Activated CD8-positive, alpha-beta T cell treated with anti-CD3 and anti-CD28 coated beads for 36 hours (primary cell): ENCODE measurements at regions of chr19 and their contacts with region 1.

Region 1: DNA sequence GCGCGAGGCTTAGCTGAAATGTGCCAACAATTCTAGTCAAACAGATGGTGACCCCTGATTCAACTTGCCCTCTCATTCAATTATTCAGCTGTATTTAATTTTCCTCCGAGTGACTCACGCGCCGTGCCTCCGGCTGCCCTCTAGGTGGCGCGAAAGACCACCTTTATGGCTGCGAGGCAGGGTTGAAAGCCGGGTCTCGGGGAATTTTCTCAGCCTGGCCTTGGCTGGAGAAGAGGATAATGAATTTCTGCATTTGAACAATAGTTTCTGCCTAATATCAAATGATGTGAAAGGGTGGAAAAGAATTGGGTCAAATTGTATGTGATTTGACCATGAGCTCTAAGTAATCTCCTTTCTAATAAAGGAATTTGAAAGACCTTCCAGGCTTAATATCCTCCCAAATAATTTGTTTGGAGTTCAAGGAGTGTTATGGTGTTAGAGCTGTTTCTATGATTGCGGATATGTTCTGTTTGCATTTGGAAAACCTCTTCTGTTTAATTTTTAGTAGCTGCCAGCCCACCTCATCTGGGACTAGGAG is 310.9 kb downstream of the ZNF536 start:
- DNase-seq: peak; percentile 64
- ATAC-seq: peak; percentile 68
- H3K4me3 Mint-ChIP-seq: no peak overlapping the region
- H3K27ac Mint-ChIP-seq: no peak overlapping the region
- H3K4me1 Mint-ChIP-seq: no peaks in the 10 kb centered on the region
- H3K27me3 Mint-ChIP-seq: peaks cover 27% of the 10 kb centered on the region
- CTCF ChIP-seq: peak; percentile 84

Region 2: GRCh38 chr19:30640252-30640965 is 42.7 kb before region 1 on chr19:
- CTCF ChIA-PET with region 1: no interaction called
- POLR2A ChIA-PET with region 1: no interaction called
- intact Hi-C with region 1: no loop called
- DNase-seq: no peak
- ATAC-seq: no peak
- H3K4me3 Mint-ChIP-seq: no peak overlapping the region
- H3K27ac Mint-ChIP-seq: no peak overlapping the region
- H3K4me1 Mint-ChIP-seq: no peaks in the 10 kb centered on the region
- H3K27me3 Mint-ChIP-seq: no peaks in the 10 kb centered on the region
- CTCF ChIP-seq: no peak

Region 3: DNA sequence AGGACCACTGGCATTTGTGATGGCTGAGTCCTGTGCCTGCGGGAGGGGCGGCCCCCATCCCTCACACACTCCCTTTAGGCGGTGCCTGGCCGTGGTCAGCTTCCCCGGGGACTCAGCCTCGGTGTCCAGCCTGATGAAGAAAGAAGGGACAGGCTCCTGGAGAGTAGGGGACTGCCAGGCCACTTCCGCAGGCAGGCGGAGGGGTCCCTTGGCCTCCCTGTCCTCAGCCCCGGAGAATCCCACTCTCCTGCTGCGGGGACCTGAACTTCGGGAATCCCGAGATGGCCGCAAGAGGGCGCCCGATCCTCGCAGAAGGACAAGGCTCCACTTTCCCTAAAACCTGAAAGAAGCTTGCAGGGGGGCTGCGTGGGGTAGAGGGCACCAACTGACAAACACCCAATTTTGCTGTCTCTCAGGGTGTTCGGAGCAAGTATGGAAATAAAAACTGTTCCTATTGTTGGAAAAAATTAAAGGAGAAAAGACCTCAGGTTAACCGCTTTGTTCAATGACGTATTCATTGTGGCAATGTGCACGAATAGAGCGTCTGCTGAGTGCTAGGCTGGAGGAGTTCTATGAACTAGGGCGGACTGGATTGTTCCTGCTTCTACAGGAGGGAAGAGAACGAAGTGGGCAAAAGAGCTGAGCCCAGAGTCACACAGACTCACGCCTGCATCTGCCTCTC is 13.6 kb before region 1 on chr19:
- CTCF ChIA-PET with region 1: interaction called, 35 read pairs
- POLR2A ChIA-PET with region 1: no interaction called
- intact Hi-C with region 1: no loop called
- DNase-seq: peak; percentile 66
- ATAC-seq: no peak
- H3K4me3 Mint-ChIP-seq: no peak overlapping the region
- H3K27ac Mint-ChIP-seq: no peak overlapping the region
- H3K4me1 Mint-ChIP-seq: no peaks in the 10 kb centered on the region
- H3K27me3 Mint-ChIP-seq: peaks cover 20% of the 10 kb centered on the region
- CTCF ChIP-seq: peak; percentile 80

Region 4: GRCh38 chr19:30695171-30695875 is 12.3 kb after region 1 on chr19:
- CTCF ChIA-PET with region 1: interaction called, 12 read pairs
- POLR2A ChIA-PET with region 1: interaction called, 4 read pairs
- intact Hi-C with region 1: no loop called
- DNase-seq: no peak
- ATAC-seq: no peak
- H3K4me3 Mint-ChIP-seq: no peak overlapping the region
- H3K27ac Mint-ChIP-seq: no peak overlapping the region
- H3K4me1 Mint-ChIP-seq: no peaks in the 10 kb centered on the region
- H3K27me3 Mint-ChIP-seq: peaks cover 32% of the 10 kb centered on the region
- CTCF ChIP-seq: no peak

Region 5: GRCh38 chr19:31356587-31357314 is 673.7 kb after region 1 on chr19:
- CTCF ChIA-PET with region 1: interaction called, 8 read pairs
- POLR2A ChIA-PET with region 1: no interaction called
- intact Hi-C with region 1: loop called (anchors 2 kb)
- DNase-seq: peak; percentile 77
- ATAC-seq: peak; percentile 91
- H3K4me3 Mint-ChIP-seq: no peak overlapping the region
- H3K27ac Mint-ChIP-seq: no peak overlapping the region
- H3K4me1 Mint-ChIP-seq: peaks cover 33% of the 10 kb centered on the region
- H3K27me3 Mint-ChIP-seq: peaks cover 81% of the 10 kb centered on the region
- CTCF ChIP-seq: peak; percentile 65

Region 6: GRCh38 chr19:32224371-32225244 is 1541.5 kb after region 1 on chr19:
- CTCF ChIA-PET with region 1: interaction called, 13 read pairs
- POLR2A ChIA-PET with region 1: no interaction called
- intact Hi-C with region 1: no loop called
- DNase-seq: peak; percentile 62
- ATAC-seq: peak; percentile 87
- H3K4me3 Mint-ChIP-seq: peak overlapping the region; percentile 63
- H3K27ac Mint-ChIP-seq: no peak overlapping the region
- H3K4me1 Mint-ChIP-seq: peaks cover 13% of the 10 kb centered on the region
- H3K27me3 Mint-ChIP-seq: peaks cover 32% of the 10 kb centered on the region
- CTCF ChIP-seq: peak; percentile 100